CD14-positive monocyte (primary cell): ENCODE measurements at regions of chr12 and their contacts with region 1.

Region 1: GRCh38 chr12:48716493-48717251 is at the start of gene CCNT1:
- DNase-seq: peak; percentile 100
- H3K4me3 ChIP-seq: peak within 1 kb of the TSS; percentile 68 to 90 (median 87)
- H3K4me3 Mint-ChIP-seq: peak within 1 kb of the TSS; percentile 94 to 97
- H3K27ac ChIP-seq: peak within 1 kb of the TSS; percentile 96 to 98
- H3K27ac Mint-ChIP-seq: peak within 1 kb of the TSS; percentile 98 to 99 (median 99)
- H3K4me1 ChIP-seq: peaks cover 17 to 24% of the 10 kb centered on the region in 2 donors
- H3K4me1 Mint-ChIP-seq: peaks cover 26% of the 10 kb centered on the region
- H3K27me3 ChIP-seq: no peaks in the 10 kb centered on the region
- H3K27me3 Mint-ChIP-seq: peaks cover 0 to 3% (median 0%) of the 10 kb centered on the region in 3 donors
- CTCF ChIP-seq: peak; percentile 29
- polyA plus RNA-seq, gene CCNT1: 2.3 to 8.3 (median 4.4) TPM

Region 2: GRCh38 chr12:48681738-48682532 is 34.7 kb before region 1 on chr12 and contains the start of gene KANSL2:
- intact Hi-C with region 1: loop called in 1 of 2 experiments (anchors 2 kb)
- DNase-seq: peak; percentile 94 to 96 (median 95)
- H3K4me3 ChIP-seq: peak within 1 kb of the TSS; percentile 67 to 93 (median 84)
- H3K4me3 Mint-ChIP-seq: peak within 1 kb of the TSS; percentile 96 to 98
- H3K27ac ChIP-seq: peak within 1 kb of the TSS; percentile 78 to 94
- H3K27ac Mint-ChIP-seq: peak within 1 kb of the TSS; percentile 92 to 98 (median 97)
- H3K4me1 ChIP-seq: peaks cover 45 to 48% of the 10 kb centered on the region in 2 donors
- H3K4me1 Mint-ChIP-seq: peaks cover 51% of the 10 kb centered on the region
- H3K27me3 ChIP-seq: no peaks in the 10 kb centered on the region
- H3K27me3 Mint-ChIP-seq: peaks cover 2 to 12% (median 3%) of the 10 kb centered on the region in 3 donors
- CTCF ChIP-seq: no peak
- polyA plus RNA-seq, gene KANSL2: 12.2 to 20.3 (median 12.5) TPM